Ascending aorta (tissue), 2 donors: ENCODE measurements at regions of chr16 and their contacts with region 1.

Region 1: DNA sequence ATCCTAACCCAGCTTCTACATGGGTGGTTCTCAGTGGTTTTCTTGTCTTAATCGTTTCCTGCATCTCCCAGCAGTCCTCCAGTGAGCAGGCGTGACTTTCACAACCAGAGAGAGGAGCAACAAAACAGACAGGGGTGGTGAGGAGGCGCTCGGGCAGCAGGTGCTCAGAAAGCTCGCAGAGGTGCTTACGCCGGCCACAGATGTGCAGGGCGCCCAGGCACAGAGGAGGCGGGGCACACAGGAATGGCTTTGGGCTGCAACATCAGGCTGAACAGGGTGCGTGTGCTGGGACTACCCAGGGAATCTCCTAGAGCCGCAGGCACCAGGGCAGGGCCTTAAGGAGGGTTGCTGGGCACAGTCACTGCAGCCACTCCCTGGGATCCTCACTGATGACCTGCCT is 32.6 kb downstream of the KLHDC4 start:
- DNase-seq: no peak
- H3K4me3 ChIP-seq: no peak overlapping the region
- H3K27ac ChIP-seq: no peak overlapping the region
- H3K4me1 ChIP-seq: no peaks in the 10 kb centered on the region
- H3K27me3 ChIP-seq: no peaks in the 10 kb centered on the region
- CTCF ChIP-seq: no peak

Region 2: GRCh38 chr16:87464691-87465300 is 268.4 kb before region 1 on chr16:
- intact Hi-C with region 1: no loop called
- DNase-seq: peak; percentile 85 to 95
- H3K4me3 ChIP-seq: peak overlapping the region; percentile 3 to 55
- H3K27ac ChIP-seq: peak overlapping the region; percentile 74 to 90
- H3K4me1 ChIP-seq: peaks cover 23 to 43% of the 10 kb centered on the region in 2 donors
- H3K27me3 ChIP-seq: no peaks in the 10 kb centered on the region
- CTCF ChIP-seq: no peak

Region 3: GRCh38 chr16:87678618-87679017 is 54.6 kb before region 1 on chr16:
- intact Hi-C with region 1: loop called (anchors 10 kb)
- DNase-seq: no peak
- H3K4me3 ChIP-seq: no peak overlapping the region
- H3K27ac ChIP-seq: no peak overlapping the region
- H3K4me1 ChIP-seq: no peaks in the 10 kb centered on the region
- H3K27me3 ChIP-seq: no peaks in the 10 kb centered on the region
- CTCF ChIP-seq: no peak

Region 4: DNA sequence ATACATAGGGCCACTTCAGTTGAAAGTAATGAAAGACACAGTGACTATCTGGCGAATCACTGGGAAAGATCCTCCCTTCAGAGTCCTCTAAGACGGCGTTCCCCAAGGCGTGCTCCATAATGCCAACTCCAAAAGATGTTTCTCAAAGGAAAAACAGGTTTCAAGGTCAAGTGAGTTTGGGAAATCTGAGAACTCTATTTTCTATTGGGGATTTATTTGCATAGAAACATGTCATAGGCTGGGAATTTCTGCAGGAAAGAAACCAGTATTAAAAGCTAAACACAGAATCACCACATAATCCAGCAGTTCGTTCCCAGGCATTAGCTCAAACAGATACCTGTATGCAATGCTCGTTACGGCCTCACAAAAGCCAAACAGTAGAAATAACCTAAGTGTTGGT is 24.7 kb after region 1 on chr16:
- intact Hi-C with region 1: no loop called
- DNase-seq: no peak
- H3K4me3 ChIP-seq: no peak overlapping the region
- H3K27ac ChIP-seq: no peak overlapping the region
- H3K4me1 ChIP-seq: no peaks in the 10 kb centered on the region
- H3K27me3 ChIP-seq: no peaks in the 10 kb centered on the region
- CTCF ChIP-seq: no peak

Region 5: DNA sequence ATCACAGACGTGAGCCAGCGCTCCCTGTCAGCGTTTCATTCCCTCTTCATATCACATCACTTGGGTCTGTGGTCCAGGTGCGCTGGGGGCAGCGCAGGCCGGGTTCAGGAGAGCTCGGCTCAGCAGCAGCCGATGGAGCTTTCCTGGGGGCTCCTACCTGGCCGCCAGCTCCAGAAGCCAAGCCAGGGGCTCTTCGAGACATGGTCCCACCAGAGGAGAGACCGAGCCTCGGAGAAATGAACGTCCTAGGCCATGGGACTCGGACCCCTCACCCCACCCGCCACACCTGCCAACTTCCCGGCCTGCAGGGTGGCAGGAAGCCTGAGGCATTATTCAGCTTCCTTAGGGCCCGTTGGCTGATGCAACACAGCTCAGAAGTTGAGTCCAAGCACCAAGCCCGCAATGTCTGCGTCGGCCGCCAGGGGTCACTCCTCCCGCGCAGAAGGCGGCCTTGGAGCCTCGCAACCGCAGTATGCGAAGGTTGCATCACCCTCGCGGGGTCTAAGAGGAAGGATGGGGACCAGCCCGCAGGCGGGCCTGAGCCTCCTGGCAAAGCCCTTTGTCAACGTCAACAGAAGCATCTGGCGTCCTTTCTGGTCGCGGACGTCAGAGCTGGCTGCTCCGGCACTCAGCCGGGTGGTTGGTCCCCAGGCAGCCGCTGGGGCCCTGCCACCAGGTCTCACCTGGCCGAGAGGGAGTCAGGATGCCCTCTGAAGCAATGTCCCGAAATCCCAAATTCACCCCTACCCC is 45.8 kb after region 1 on chr16:
- intact Hi-C with region 1: no loop called
- DNase-seq: peak; percentile 76 to 95
- H3K4me3 ChIP-seq: no peak overlapping the region
- H3K27ac ChIP-seq: no peak overlapping the region
- H3K4me1 ChIP-seq: peaks cover 0 to 8% of the 10 kb centered on the region in 2 donors
- H3K27me3 ChIP-seq: no peaks in the 10 kb centered on the region
- CTCF ChIP-seq: peak; percentile 94 to 99 (median 96)